Posterior cingulate gyrus (tissue), 11 donors: ENCODE measurements at regions of chr18 and their contacts with region 1.

Region 1: DNA sequence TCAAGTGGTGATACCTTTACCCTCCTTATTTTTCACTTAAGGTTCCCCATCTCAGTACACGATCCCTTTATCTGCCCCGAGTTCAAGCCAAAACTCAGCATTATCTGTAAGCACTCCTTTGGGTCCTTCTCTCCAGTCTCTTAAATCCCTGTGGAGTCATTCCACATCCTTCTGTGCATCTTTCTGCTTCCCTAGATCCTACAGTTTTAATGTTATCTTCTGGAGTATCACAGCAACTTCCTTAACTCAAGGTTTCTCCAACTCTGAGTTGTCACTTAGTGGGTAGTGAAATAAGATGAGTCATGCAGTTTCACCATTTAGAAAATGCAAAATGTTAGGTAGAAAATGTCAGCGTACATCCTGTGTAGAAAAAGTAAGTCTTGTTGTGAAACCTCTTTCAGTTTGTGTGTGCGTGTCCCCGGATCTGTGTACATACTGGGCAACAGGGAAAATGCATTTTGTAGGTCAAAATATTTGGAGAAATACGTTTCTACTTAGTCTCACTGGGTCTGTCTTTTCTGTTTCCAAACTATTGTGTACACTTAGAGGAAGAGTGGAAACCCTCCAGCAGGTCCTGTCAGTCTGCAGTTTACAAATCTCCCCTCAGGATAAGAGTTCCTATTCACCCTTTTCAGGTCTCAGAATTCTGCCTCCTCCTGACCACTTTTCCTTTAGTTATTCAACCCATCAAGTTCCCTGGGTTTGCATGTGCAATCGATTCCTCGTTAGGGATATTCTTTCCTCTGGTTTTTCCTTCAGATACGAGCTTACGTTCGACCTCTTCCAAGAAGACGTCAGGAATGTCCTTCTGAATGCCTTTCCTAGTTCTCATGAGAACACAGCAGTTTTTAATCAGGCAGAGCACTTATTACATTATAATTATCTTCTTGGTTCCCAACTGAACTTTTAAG is 154.8 kb downstream of the TGIF1 start:
- DNase-seq: peak in 1 of 10 donors; percentile 11

Region 2: GRCh38 chr18:2395427-2396161 is 1209.2 kb before region 1 on chr18:
- intact Hi-C with region 1: no loop called
- DNase-seq: no peak

Region 3: GRCh38 chr18:3665780-3666525 is 61.2 kb after region 1 on chr18:
- intact Hi-C with region 1: loop called (anchors 5 kb)
- DNase-seq: peak; percentile 69 to 96 (median 82)

Region 4: DNA sequence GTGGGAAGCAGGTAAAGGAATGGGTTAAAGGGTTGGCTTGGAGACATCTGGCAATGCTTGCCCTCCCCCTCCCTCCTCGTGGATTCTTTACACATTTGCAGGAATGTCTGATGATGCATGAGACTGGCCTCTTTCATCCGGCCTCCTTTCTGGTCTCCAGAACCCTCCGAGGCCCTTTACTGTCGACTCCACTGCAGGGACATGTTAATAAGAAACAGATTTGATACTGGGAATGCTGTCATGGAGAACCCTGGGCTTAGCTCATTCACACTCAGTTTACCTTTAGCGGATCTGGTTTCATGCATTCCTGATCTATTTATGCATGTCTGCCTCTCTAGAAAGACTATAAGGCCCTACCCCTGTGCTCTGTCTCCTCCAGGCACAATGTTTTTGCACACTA is 83.9 kb after region 1 on chr18:
- intact Hi-C with region 1: no loop called
- DNase-seq: no peak

Region 5: DNA sequence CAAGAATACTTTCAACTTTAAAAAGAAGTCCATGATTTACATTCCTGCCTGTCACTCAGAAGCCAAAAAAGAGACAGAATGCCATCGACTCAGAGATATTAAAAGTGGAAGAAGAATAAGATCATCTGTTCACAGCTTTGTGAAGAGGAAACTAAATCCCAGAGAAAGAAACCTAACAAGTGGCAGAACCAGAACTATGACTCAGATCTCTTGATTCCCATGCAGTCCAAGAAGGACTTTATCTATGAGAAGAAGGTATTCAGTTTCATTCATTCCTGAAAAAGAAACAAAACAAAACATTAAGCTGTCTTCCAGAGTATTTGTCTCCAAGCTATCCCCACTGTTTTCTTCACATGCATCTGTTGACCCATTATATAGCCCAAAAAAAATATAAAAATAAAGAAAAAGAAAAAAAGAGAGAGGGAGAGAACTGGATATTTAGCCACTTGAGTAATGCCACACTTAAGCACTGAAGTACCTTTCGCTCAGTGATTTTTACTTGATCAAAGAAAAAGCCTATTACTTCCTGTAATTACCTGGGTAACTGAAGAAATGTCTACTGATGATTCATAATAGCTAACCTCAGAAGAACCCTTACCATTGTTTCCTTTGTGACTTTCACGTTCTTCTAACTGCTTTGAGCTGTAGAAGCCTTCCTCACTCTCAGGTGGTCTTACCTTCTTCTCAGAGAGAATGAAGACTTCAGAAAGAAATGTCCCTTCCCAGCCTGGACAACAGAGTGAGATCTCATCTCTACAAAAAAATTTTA is 1610.0 kb after region 1 on chr18:
- intact Hi-C with region 1: no loop called
- DNase-seq: no peak